ENCODE measurements at regions of chr6 and their contacts with region 1.

Region 1: GRCh38 chr6:36912586-36912985 is 26.8 kb downstream of the C6orf89 start:
- DNase-seq: peak; percentile 93
- H3K4me3 Mint-ChIP-seq: peak overlapping the region; percentile 82
- H3K27ac Mint-ChIP-seq: peak overlapping the region; percentile 89
- H3K4me1 Mint-ChIP-seq: peaks cover 57% of the 10 kb centered on the region
- H3K27me3 Mint-ChIP-seq: no peaks in the 10 kb centered on the region

Region 2: DNA sequence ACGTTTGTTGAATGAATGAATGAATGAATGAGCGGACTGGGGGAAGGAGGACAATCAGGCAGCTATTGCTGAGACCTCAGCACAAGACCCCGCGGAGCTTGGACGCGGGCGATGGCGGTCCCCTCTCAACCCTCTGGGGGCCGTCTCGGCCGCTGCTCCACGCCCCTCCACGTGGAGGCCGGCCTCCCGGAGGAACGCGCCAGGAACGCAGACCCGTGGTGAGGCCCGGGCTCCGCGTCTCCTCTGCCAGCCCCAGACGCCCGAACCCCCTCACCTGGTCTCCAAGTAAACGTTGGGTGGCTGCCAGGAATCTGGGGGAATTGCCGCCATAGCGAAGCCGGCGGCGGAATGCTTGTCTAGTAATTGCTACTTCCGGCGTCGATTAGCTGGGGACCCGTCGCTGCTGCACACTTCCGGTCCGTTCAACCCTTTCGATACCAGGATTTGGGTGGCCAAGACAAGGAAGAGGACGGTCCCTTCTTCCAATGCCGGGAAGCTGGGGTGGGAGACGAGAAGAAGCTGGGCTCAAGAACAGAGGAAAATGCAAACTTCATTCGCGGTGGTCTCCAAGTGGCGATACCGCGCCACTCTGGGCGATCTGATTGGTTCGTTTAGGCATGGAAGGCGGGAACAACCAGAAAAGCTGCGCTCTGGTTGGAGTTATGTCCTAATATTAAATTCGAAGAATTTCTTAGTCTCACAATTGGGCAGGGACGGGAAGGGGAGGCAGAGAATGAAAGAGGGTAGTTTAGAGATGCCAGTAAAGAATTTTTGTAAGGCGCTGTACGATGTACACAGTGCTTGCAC is 37.9 kb before region 1 on chr6 and contains the start of gene PPIL1:
- intact Hi-C with region 1: loop called (anchors 1 kb)
- DNase-seq: peak; percentile 94
- H3K4me3 Mint-ChIP-seq: peak within 1 kb of the TSS; percentile 99
- H3K27ac Mint-ChIP-seq: peak within 1 kb of the TSS; percentile 98
- H3K4me1 Mint-ChIP-seq: peaks cover 38% of the 10 kb centered on the region
- H3K27me3 Mint-ChIP-seq: peaks cover 3% of the 10 kb centered on the region
- total RNA-seq, gene PPIL1: 65.0 and 65.1 TPM in 2 replicates

Region 3: DNA sequence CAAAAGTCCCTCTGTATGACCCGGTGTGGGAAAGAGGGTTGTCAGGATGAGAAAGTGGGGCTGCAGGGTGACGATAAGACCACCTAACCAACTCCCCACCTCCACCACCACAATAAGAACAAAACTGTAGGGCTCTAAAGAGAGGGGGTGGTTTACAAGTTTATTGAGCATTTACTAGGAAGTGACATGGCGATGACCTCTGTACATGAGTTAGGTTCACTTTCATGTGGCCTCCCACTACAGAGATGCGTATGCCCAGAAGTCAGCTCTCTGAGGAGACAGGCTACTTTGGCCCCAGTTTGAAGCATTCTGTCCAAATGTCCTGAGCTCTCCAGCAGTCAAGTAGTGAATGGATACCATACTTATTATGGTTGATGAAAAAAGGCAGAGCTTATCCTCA is 13.2 kb after region 1 on chr6:
- intact Hi-C with region 1: loop called (anchors 1 kb)
- DNase-seq: peak; percentile 65
- H3K4me3 Mint-ChIP-seq: peak overlapping the region; percentile 9
- H3K27ac Mint-ChIP-seq: peak overlapping the region; percentile 70
- H3K4me1 Mint-ChIP-seq: peaks cover 25% of the 10 kb centered on the region
- H3K27me3 Mint-ChIP-seq: no peaks in the 10 kb centered on the region

Region 4: DNA sequence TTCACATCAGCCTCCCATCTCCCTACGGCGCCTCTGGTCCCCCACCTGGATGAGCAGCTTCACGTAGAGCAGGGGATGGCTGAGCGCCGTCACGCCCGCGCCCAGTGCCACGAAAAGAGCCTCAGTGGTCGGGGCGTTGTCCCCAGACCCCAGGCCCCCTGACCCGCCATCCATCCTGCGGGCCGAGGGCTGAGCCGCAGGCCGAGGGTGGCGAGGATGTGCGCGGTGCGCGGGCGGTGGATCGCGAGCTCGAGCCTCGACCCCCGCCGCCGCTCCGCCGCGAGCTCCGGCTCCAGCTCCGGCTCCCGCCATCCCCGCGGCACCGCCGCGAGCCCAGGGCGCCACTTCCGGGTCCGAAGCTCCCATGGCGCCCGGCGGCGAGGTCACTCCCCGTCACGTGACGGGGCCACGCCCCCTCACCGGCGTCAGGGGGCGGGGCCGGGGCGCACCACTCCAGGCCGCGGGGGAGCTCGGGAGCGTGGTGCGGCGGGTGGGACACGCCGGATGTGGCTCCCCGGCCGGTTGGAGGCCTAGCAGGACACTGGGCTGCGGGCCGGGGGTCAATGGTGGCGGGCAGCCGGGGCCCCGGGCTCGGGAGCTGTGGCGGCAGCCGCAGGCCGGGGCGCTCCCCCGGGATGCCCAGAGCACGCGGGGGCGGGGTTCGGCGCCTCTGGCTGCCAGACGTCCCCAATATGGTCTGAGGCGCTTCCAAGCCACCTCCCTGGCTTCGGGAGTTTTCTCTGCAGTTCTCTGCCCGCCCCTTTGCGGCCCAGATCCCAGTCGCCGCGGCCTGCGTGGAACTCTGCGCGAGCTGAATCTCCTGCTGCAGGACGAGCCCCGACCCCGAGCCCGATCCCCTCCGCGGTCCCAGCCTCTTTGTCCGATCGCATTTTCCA is 73.5 kb after region 1 on chr6 and contains the start of gene MTCH1:
- intact Hi-C with region 1: loop called (anchors 1 kb)
- DNase-seq: peak; percentile 97
- H3K4me3 Mint-ChIP-seq: no peak within 1 kb of the TSS
- H3K27ac Mint-ChIP-seq: peak within 1 kb of the TSS; percentile 97
- H3K4me1 Mint-ChIP-seq: peaks cover 19% of the 10 kb centered on the region
- H3K27me3 Mint-ChIP-seq: peaks cover 7% of the 10 kb centered on the region
- total RNA-seq, gene MTCH1: 119 TPM in 2 replicates

Region 5: GRCh38 chr6:37207903-37208456 is 295.4 kb after region 1 on chr6:
- intact Hi-C with region 1: loop called (anchors 2 kb)
- DNase-seq: peak; percentile 96
- H3K4me3 Mint-ChIP-seq: peak overlapping the region; percentile 57
- H3K27ac Mint-ChIP-seq: peak overlapping the region; percentile 86
- H3K4me1 Mint-ChIP-seq: peaks cover 58% of the 10 kb centered on the region
- H3K27me3 Mint-ChIP-seq: no peaks in the 10 kb centered on the region

Region 6: GRCh38 chr6:38508894-38509293 is 1596.3 kb after region 1 on chr6:
- intact Hi-C with region 1: no loop called
- DNase-seq: no peak
- H3K4me3 Mint-ChIP-seq: no peak overlapping the region
- H3K27ac Mint-ChIP-seq: no peak overlapping the region
- H3K4me1 Mint-ChIP-seq: peaks cover 2% of the 10 kb centered on the region
- H3K27me3 Mint-ChIP-seq: no peaks in the 10 kb centered on the region

Measured in activated CD4-positive, alpha-beta T cell treated with anti-CD3 and anti-CD28 coated beads, Interleukin-2, amount 10 ng/mL, durations not matched to agents 24 days and 14 days (primary cell).